Motor neuron (in vitro differentiated cells): ENCODE measurements at regions of chr7 and their contacts with region 1.

Region 1: DNA sequence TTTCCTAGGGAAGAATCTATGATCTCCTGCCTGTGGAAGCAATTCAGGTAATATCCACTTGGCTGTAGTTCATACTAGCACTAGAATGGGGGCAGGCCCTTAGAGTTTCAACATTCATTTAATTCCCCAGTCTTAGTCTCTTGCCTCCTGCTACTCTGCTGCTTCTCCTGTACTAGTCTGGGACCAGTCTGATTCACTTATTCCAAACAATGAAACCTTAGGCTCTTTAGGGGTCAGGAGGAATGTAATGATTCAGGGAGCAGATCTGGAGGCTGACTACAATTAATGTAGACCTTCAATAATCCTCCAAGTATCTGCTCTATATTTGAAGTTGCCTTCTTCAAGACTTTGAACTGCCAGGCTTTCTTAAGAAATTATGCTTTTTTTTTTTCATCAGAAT is 101.8 kb downstream of the GNAT3 start:
- ATAC-seq: no peak
- H3K4me3 ChIP-seq: no peak overlapping the region
- H3K27ac ChIP-seq: no peak overlapping the region
- H3K4me1 ChIP-seq: peaks cover 3 to 5% of the 10 kb centered on the region in 2 donors

Region 2: DNA sequence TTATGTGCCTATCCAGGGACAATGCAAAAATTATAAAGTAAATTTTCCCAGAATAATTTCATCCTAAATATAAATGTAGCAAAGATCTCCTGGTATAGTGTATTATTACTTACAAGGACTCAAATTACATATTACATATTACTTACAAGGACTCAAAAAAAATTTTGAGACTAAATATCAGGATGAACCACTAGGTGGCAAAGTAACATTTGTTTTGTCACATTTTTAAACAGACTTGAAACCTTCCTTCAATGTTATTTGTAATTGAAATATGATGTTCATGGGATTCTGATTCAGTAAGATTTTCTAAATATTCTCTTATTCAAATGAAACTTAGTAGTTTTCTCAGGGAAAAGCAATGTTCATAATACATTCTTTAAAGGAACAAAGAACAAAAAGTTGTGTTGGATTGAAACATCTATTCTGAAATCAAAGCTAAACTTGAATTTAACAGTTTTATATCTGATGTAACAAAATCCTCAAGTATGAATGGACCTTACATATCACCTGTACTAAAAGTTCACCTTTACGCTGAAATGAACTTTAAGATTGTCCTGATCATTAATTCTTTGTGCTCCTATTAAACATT is 349.8 kb before region 1 on chr7:
- in situ Hi-C with region 1: loop called in 1 of 9 experiments (anchors 25 kb)
- ATAC-seq: peak in 3 of 8 experiments; percentile 42 to 48 (median 46)
- H3K4me3 ChIP-seq: no peak overlapping the region
- H3K27ac ChIP-seq: no peak overlapping the region
- H3K4me1 ChIP-seq: no peaks in the 10 kb centered on the region

Region 3: GRCh38 chr7:80833289-80834268 is 423.5 kb after region 1 on chr7:
- in situ Hi-C with region 1: no loop called
- ATAC-seq: peak; percentile 62 to 95 (median 92)
- H3K4me3 ChIP-seq: peak overlapping the region in 1 of 5 donors; percentile 2
- H3K27ac ChIP-seq: peak overlapping the region; percentile 79 to 81
- H3K4me1 ChIP-seq: peaks cover 27 to 46% of the 10 kb centered on the region in 2 donors